ENCODE measurements at regions of chrX and their contacts with region 1.

Region 1: DNA sequence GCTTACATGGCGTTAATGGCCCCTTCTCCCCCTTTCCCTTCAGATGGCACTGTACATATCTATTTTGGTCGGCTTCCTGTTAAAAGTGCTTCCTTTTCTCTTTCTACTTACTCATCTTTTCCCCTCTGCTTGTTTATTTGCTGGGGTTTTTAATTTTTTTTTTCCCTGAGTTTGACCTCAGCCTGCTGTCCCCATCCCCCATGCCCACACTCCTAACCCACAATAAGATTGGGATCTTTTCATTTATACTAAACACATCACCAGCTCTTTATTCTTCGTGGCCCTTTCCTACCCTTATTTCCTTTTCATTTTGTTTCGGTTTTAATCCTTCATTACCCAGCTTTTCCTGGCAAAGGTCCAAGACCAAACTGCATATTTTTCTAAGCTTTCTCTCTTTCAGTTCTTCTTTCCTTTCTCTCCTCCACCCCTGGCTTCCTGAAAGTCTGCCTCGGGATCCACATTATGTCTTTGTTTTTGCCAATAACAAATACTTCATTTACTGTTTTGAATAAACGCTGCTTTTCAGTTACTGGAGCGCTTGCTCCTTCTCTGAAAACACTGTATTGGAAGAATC is 152.0 kb upstream of the USP9X start:
- H3K4me3 Mint-ChIP-seq: peak overlapping the region; percentile 76
- H3K27ac Mint-ChIP-seq: peak overlapping the region; percentile 97
- H3K4me1 Mint-ChIP-seq: peaks cover 40% of the 10 kb centered on the region
- H3K27me3 Mint-ChIP-seq: no peaks in the 10 kb centered on the region

Region 2: GRCh38 chrX:41084044-41084892 is 151.0 kb after region 1 on chrX:
- intact Hi-C with region 1: loop called (anchors 10 kb)
- H3K4me3 Mint-ChIP-seq: peak overlapping the region; percentile 92
- H3K27ac Mint-ChIP-seq: peak overlapping the region; percentile 97
- H3K4me1 Mint-ChIP-seq: no peaks in the 10 kb centered on the region
- H3K27me3 Mint-ChIP-seq: no peaks in the 10 kb centered on the region